ENCODE measurements at regions of chr1 and their contacts with region 1.

Region 1: DNA sequence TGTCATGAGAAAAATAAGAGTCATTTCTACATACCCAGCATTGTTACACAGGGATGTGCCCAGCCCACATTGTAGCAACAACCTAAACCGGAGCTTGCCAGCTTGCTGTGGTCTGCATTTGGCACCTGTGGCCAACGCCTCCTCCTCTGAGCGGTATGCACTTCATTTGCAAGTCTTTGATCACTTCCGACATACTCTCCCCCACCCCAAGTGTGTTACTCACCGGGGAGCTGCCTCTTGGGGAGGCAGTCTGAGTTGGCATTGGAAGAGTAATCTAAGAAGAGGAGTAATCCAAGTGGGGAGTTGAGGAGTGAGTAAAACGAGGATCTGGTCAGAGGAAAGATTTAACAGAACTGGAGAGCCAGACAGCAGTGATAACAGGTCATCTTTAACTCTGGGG is 3.8 kb downstream of the BCL9 start:
- DNase-seq: peak; percentile 67
- H3K4me3 Mint-ChIP-seq: peak overlapping the region; percentile 50
- H3K27ac Mint-ChIP-seq: peak overlapping the region; percentile 70
- H3K4me1 Mint-ChIP-seq: peaks cover 20% of the 10 kb centered on the region
- H3K27me3 Mint-ChIP-seq: peaks cover 4% of the 10 kb centered on the region

Region 2: DNA sequence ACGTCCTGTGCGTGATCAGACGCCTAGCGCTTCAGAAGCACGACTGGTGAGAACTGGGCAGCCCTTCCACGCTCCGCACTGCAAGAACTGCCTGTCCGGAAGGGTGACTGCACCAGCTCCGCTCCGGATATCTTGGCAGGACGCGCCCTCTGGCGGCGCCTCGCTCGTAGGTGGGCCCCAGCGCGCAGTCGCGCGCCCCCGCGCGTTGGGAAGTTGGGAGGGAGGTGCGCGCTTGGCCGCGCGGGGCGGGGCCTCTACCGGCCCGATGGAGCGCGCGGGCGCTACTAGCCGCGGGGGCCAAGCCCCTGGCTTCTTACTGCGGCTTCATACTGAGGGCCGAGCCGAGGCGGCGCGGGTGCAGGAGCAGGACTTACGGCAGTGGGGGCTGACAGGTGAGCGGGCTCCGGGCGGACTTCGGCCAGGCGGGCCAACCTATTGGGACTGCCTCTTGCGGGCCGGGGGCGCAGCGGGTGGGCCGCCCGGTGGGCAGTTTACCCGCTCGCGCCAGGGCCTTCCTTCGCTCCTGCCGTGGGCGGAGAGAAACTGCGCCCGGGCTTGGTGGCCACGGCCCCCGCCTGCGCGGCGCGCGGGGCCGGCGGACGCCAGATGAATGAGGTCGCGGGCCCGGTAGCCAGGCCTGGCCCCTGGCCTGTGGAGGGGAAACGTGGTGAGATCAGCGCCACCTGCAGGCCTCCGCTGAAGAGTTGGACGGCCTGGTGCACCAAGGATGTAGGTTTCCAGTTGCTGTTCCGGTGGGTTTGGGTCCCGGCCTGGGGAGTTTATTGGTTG is 302.5 kb before region 1 on chr1 and contains the start of gene CHD1L:
- intact Hi-C with region 1: loop called (anchors 10 kb)
- DNase-seq: peak; percentile 92
- H3K4me3 Mint-ChIP-seq: peak within 1 kb of the TSS; percentile 95
- H3K27ac Mint-ChIP-seq: peak within 1 kb of the TSS; percentile 94
- H3K4me1 Mint-ChIP-seq: peaks cover 43% of the 10 kb centered on the region
- H3K27me3 Mint-ChIP-seq: no peaks in the 10 kb centered on the region
- total RNA-seq, gene CHD1L: 67.6 and 75.1 TPM in 2 replicates

Region 3: DNA sequence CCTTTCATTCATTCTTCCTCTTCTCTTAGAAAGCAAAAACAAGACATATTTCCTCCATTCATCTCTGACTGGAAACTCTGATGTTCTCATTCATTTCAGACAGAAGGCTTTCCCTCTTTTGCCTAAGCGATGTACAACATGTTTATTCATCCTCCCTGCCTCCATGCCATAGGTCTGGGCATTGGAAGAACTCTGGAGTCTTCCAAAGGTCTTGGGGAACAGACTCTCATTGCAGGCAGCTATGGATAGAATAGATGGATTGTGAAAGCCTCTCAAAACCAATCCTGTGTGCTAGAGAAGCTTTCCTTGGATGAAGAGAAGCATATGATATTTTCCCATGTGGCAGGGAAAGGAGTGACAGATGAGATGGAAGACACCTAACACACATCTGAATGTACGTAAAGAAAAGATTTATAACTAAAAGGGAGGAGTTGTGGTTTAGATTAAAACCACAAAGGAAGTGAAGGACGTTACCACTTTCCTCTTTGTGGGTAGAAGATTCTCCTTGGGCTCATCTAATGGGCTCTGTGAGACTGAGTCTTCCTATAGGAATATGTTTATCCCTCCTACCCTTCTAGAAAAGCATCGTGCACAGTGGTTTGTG is 34.9 kb after region 1 on chr1:
- intact Hi-C with region 1: loop called (anchors 1 kb)
- DNase-seq: no peak
- H3K4me3 Mint-ChIP-seq: no peak overlapping the region
- H3K27ac Mint-ChIP-seq: no peak overlapping the region
- H3K4me1 Mint-ChIP-seq: peaks cover 15% of the 10 kb centered on the region
- H3K27me3 Mint-ChIP-seq: peaks cover 27% of the 10 kb centered on the region

Region 4: DNA sequence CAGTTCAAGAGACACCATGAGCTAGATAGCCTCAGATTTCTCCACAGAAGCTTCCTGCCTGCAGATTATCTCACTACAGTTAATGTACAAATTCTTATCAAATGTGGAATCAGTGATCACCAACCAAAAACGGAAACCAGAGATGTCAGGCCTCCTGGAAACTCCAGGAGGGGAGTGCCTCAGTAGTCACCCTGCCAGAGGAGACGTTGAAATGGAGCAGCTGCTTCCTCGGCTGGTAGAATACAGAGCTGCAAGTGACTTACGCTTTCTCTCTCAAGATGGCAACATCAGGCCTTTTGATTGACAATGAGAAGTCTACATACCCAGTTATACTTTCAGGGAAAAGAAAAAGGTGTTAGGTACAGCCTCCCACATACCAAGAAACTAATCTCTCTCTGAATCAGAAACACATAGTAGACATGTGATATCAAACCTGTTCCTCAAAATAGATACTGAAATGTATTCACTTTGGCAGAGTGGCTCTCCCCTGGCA is 73.0 kb after region 1 on chr1:
- intact Hi-C with region 1: loop called (anchors 1 kb)
- DNase-seq: peak; percentile 55
- H3K4me3 Mint-ChIP-seq: peak overlapping the region; percentile 15
- H3K27ac Mint-ChIP-seq: peak overlapping the region; percentile 74
- H3K4me1 Mint-ChIP-seq: peaks cover 40% of the 10 kb centered on the region
- H3K27me3 Mint-ChIP-seq: no peaks in the 10 kb centered on the region